SK-N-SH (cell line): ENCODE measurements at regions of chr6 and their contacts with region 1.

Region 1: DNA sequence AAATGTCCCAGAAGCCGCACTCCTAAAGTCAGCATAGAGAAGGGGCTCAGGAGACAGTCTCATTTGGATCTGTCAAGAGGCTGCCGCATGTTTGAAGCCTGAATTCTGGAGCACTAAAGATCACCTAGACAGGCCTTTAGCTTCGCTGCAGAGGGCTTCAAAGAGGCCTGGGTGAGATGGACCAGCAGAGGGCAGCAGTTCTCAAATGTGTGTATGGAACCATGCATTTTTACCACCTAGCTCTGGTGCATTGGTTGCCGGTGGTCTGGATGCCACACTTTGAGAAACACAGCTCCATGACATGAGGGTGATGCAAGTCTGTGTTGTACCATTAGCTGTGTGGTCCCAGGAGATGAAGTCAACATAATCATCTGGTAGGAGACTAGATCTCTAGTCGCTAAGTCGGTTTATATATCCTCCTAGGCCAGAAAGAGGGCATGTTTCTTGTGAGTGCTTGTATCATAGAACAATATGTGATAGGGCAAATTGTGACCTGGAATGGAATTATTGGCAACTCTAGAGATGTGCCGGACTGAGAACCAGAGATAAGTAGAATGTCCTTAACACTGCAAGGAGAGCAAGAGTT is 64.8 kb downstream of the KIAA0319 start:
- DNase-seq: peak; percentile 57
- H3K4me3 ChIP-seq: no peak overlapping the region; a peak in 1 of 4 replicates
- H3K27ac ChIP-seq: no peak overlapping the region
- H3K4me1 ChIP-seq: peaks cover 5 to 13% of the 10 kb centered on the region in 2 experiments; a peak in 2 of 4 replicates
- H3K27me3 ChIP-seq: no peaks in the 10 kb centered on the region; the same call in 1 of the 2 replicates
- CTCF ChIP-seq: peak; percentile 86
- EP300 ChIP-seq: no peak
- RAD21 ChIP-seq: peak; percentile 82

Region 2: GRCh38 chr6:24494821-24495795 is 86.1 kb before region 1 on chr6 and contains the start of gene ALDH5A1:
- CTCF ChIA-PET with region 1: interaction called, 14 read pairs
- POLR2A ChIA-PET with region 1: no interaction called
- DNase-seq: peak; percentile 88
- H3K4me3 ChIP-seq: peak within 1 kb of the TSS; percentile 65 to 69
- H3K27ac ChIP-seq: peak within 1 kb of the TSS; percentile 28 to 67
- H3K4me1 ChIP-seq: peaks cover 0 to 10% of the 10 kb centered on the region in 2 experiments; a peak in 1 of 4 replicates
- H3K27me3 ChIP-seq: no peaks in the 10 kb centered on the region
- CTCF ChIP-seq: no peak; the same call in none of the 2 replicates
- EP300 ChIP-seq: no peak
- RAD21 ChIP-seq: peak; percentile 43
- polyA plus RNA-seq, gene ALDH5A1: 3.0 and 3.7 TPM in 2 replicates

Region 3: DNA sequence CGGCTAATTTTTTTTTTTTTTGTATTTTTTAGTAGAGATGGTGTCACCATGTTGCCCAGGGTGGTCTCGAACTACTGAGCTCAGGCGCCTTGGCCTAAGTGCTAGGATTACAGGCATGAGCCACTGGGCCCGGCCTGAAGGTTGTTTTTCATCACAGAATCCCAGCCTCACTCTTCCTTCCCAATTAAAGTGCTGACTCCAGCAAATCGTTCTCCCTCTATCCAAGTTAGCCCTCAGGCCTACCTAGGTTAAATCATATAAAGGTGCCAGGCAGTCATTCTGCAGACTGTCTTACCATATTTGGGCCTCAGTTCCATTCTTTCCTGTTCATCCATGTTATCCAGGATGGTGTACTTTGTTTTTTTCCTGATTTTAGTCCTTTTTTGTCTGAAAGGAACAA is 30.0 kb before region 1 on chr6:
- CTCF ChIA-PET with region 1: interaction called, 11 read pairs
- POLR2A ChIA-PET with region 1: no interaction called
- DNase-seq: no peak
- H3K4me3 ChIP-seq: no peak overlapping the region
- H3K27ac ChIP-seq: no peak overlapping the region
- H3K4me1 ChIP-seq: no peaks in the 10 kb centered on the region; a peak in 1 of 4 replicates
- H3K27me3 ChIP-seq: no peaks in the 10 kb centered on the region; the same call in 1 of the 2 replicates
- CTCF ChIP-seq: no peak
- EP300 ChIP-seq: no peak
- RAD21 ChIP-seq: no peak

Region 4: DNA sequence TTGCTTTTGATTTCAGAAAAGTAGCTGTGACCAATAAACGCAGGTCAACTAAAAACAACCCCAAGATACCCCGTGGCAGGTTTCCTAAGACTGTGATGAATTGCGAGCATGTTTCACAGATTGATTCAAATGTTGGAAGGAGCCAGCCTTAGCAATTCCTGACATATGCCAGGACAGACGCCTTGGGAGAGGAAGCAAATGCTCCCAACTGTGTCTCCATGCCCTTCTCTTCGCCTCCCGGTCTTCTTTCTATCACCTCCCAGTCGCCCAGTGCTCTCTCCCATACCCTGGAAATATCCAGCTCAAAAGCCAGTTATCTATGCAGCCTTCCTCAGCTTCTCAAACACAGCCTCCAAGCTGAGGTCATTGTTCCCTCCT is 32.9 kb after region 1 on chr6:
- CTCF ChIA-PET with region 1: interaction called, 13 read pairs
- POLR2A ChIA-PET with region 1: no interaction called
- DNase-seq: no peak
- H3K4me3 ChIP-seq: no peak overlapping the region
- H3K27ac ChIP-seq: no peak overlapping the region
- H3K4me1 ChIP-seq: no peaks in the 10 kb centered on the region
- H3K27me3 ChIP-seq: no peaks in the 10 kb centered on the region
- CTCF ChIP-seq: no peak
- EP300 ChIP-seq: no peak
- RAD21 ChIP-seq: no peak

Region 5: DNA sequence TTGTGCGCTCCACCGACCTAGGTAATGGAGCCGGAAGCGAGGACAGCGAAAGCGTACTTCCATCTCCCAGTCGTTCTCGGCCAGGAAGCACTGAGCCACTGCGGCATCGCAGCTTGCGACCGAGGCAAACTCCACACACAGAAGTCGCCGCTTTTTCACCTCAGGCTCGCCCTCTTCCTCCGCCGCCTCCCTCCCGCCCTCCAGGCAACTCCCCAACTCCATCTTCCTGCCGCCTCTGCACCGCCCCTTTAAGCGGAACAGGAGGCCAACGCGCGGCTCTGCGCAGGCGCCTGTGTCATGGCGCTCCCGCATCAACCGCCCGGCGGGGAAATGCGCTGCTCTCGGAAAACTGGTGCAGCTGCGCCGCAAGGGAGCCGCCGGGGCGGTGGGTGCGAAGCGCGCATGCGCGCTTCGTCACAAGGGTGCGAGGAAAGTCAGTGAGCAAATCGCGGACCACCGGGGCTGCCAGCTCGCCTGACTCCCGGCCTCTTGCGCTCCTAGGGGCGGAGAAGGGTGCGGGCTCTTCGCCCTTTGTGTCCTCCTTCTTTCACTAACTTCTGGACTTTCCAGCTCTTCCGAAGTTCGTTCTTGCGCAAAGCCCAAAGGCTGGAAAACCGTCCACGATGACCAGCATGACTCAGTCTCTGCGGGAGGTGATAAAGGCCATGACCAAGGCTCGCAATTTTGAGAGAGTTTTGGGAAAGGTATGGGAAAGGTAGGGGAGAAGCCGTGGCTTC is 85.6 kb after region 1 on chr6 and contains the starts of genes ACOT13 and TDP2:
- CTCF ChIA-PET with region 1: interaction called, 96 read pairs
- POLR2A ChIA-PET with region 1: interaction called, 12 read pairs
- DNase-seq: peak; percentile 96
- H3K4me3 ChIP-seq: peak within 1 kb of the TSS; percentile 67 to 82
- H3K27ac ChIP-seq: peak within 1 kb of the TSS; percentile 87 to 91
- H3K4me1 ChIP-seq: peaks cover 6 to 14% of the 10 kb centered on the region in 2 experiments; a peak in 2 of 4 replicates
- H3K27me3 ChIP-seq: no peaks in the 10 kb centered on the region
- CTCF ChIP-seq: peak; percentile 58
- EP300 ChIP-seq: no peak; a peak in 2 of 4 replicates
- RAD21 ChIP-seq: peak; percentile 64
- polyA plus RNA-seq, gene ACOT13: 18.0 and 20.8 TPM in 2 replicates
- polyA plus RNA-seq, gene TDP2: 20.0 and 20.2 TPM in 2 replicates

Region 6: GRCh38 chr6:24699521-24700359 is 118.6 kb after region 1 on chr6:
- CTCF ChIA-PET with region 1: interaction called, 65 read pairs
- POLR2A ChIA-PET with region 1: interaction called, 3 read pairs
- DNase-seq: no peak
- H3K4me3 ChIP-seq: no peak overlapping the region
- H3K27ac ChIP-seq: no peak overlapping the region; a peak in 1 of 4 replicates
- H3K4me1 ChIP-seq: no peaks in the 10 kb centered on the region
- H3K27me3 ChIP-seq: no peaks in the 10 kb centered on the region
- CTCF ChIP-seq: no peak
- EP300 ChIP-seq: no peak
- RAD21 ChIP-seq: no peak

Region 7: GRCh38 chr6:24883618-24884017 is 302.4 kb after region 1 on chr6:
- CTCF ChIA-PET with region 1: no interaction called
- POLR2A ChIA-PET with region 1: no interaction called
- DNase-seq: no peak
- H3K4me3 ChIP-seq: no peak overlapping the region
- H3K27ac ChIP-seq: no peak overlapping the region
- H3K4me1 ChIP-seq: peaks cover 0 to 2% of the 10 kb centered on the region in 2 experiments; a peak in 2 of 4 replicates
- H3K27me3 ChIP-seq: no peaks in the 10 kb centered on the region
- CTCF ChIP-seq: no peak
- EP300 ChIP-seq: no peak
- RAD21 ChIP-seq: no peak